Activated CD4-positive, alpha-beta memory T cell treated with anti-CD3 and anti-CD28 coated beads for 36 hours (primary cell): ENCODE measurements at regions of chr11 and their contacts with region 1.

Region 1: DNA sequence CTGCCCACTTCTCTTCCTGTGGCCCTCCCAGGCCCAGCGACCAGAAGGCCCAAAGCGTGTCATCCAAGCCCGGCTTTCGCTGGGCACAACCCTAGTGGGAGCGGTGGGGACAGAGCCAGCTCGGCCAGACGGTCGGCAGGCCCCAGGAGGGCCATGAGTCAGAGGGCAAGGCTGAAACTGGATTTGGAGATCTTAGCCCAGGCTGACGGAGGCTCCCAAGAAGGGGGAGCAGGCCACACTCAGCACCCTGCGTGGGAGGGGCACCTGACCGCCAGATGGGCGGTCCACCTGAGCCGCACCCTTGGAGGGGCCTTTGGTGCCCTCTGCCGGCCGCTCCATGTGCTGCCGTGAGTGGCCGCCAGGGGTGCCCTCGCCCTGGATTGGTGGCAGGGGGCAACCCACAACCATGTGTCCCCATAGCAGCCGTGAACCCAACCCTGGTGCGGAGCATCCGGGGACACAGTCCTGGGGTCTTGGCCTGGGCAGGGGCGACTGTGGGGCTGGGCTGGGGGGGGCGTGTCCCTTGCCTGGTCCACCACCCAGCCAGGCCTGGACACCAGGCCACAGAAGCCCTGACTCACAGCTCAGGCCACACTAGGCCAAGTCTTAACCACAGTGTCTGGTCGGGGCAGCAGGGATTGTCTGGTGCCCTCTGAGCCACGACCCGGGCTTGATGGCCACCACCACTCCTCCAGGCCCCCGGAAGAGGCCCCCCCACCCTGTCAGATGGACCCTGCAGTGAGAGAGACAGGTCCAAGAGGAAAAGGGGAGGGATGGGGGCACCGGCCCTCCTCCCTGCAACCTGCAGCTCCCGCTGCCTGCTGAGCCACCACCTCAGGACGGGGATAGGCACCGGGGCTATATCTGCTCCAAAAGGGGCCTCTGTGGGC is 19.2 kb upstream of the TALDO1 start:
- DNase-seq: peak; percentile 88
- H3K4me3 Mint-ChIP-seq: no peak overlapping the region
- H3K27ac Mint-ChIP-seq: no peak overlapping the region
- H3K4me1 Mint-ChIP-seq: peaks cover 18% of the 10 kb centered on the region
- H3K27me3 Mint-ChIP-seq: peaks cover 1% of the 10 kb centered on the region

Region 2: DNA sequence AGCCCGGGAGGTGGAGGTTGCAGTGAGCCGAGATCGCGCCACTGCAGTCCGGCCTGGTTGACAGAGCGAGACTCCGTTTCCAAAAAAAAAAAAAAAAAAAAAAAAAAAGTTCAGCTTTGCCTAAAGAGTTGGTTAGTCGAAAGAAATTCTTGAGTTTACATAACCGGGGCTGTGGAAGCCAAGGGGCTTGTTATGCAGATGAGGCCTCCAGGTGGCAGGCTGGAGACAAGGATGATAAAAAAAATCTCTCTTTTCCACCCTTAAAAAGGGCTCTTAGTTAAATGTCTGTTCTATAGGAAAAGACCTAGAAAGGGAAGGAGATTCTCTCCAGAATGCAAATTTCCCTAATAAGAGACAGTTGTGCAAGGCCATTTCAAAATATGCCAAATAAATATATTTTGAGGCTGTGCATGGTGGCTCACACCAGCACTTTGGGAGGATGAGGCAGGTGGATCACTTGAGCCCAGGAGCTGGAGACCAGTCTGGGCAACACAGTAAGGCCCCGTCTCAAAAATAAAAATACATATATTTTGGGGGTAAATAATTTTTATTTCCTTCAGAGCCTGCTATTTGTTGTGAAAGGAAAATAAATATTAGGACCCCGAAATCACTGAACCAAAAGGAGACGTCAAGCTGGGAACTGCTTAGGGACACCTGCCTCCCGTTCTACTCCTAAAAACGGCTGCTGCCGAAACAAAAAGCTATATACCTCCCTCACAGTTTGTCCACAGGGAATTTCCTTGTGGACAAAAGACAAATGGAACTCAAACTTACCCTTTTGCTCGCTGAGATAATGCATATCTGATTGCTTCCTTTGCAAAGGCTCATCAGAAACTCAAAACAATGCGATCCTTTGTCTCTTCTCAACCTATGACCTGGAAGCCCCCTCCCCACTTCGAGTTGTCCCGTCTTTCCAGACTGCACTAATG is 422.9 kb before region 1 on chr11:
- CTCF ChIA-PET with region 1: no interaction called
- POLR2A ChIA-PET with region 1: no interaction called
- intact Hi-C with region 1: no loop called
- DNase-seq: peak; percentile 76
- H3K4me3 Mint-ChIP-seq: no peak overlapping the region
- H3K27ac Mint-ChIP-seq: peak overlapping the region; percentile 5
- H3K4me1 Mint-ChIP-seq: peaks cover 38% of the 10 kb centered on the region
- H3K27me3 Mint-ChIP-seq: peaks cover 3% of the 10 kb centered on the region

Region 3: GRCh38 chr11:535519-536454 is 192.3 kb before region 1 on chr11 and contains the start of gene HRAS:
- CTCF ChIA-PET with region 1: interaction called, 5 read pairs
- POLR2A ChIA-PET with region 1: no interaction called
- intact Hi-C with region 1: loop called (anchors 5 kb)
- DNase-seq: peak; percentile 95
- H3K4me3 Mint-ChIP-seq: peak within 1 kb of the TSS; percentile 85
- H3K27ac Mint-ChIP-seq: peak within 1 kb of the TSS; percentile 78
- H3K4me1 Mint-ChIP-seq: peaks cover 9% of the 10 kb centered on the region
- H3K27me3 Mint-ChIP-seq: no peaks in the 10 kb centered on the region
- total RNA-seq, gene HRAS: 39.8 to 42.0 TPM

Region 4: GRCh38 chr11:568306-569157 is 159.6 kb before region 1 on chr11:
- CTCF ChIA-PET with region 1: interaction called, 10 read pairs
- POLR2A ChIA-PET with region 1: no interaction called
- intact Hi-C with region 1: no loop called
- DNase-seq: peak; percentile 95
- H3K4me3 Mint-ChIP-seq: peak overlapping the region; percentile 75
- H3K27ac Mint-ChIP-seq: peak overlapping the region; percentile 58
- H3K4me1 Mint-ChIP-seq: peaks cover 5% of the 10 kb centered on the region
- H3K27me3 Mint-ChIP-seq: no peaks in the 10 kb centered on the region

Region 5: GRCh38 chr11:662689-663274 is 65.3 kb before region 1 on chr11:
- CTCF ChIA-PET with region 1: interaction called, 38 read pairs
- POLR2A ChIA-PET with region 1: no interaction called
- intact Hi-C with region 1: loop called (anchors 1 kb)
- DNase-seq: peak; percentile 56
- H3K4me3 Mint-ChIP-seq: no peak overlapping the region
- H3K27ac Mint-ChIP-seq: no peak overlapping the region
- H3K4me1 Mint-ChIP-seq: no peaks in the 10 kb centered on the region
- H3K27me3 Mint-ChIP-seq: no peaks in the 10 kb centered on the region

Region 6: GRCh38 chr11:747158-748006 is 19.3 kb after region 1 on chr11 and contains the start of gene TALDO1:
- CTCF ChIA-PET with region 1: interaction called, 16 read pairs
- POLR2A ChIA-PET with region 1: interaction called, 5 read pairs
- intact Hi-C with region 1: loop called (anchors 2 kb)
- DNase-seq: peak; percentile 92
- H3K4me3 Mint-ChIP-seq: peak within 1 kb of the TSS; percentile 81
- H3K27ac Mint-ChIP-seq: peak within 1 kb of the TSS; percentile 54
- H3K4me1 Mint-ChIP-seq: peaks cover 17% of the 10 kb centered on the region
- H3K27me3 Mint-ChIP-seq: no peaks in the 10 kb centered on the region
- total RNA-seq, gene TALDO1: 284 to 296 TPM